Dendritic cell treated with granulocyte-macrophage colony-stimulating factor and Interleukin-4, amounts not matched to agents 40 ng/mL and 50 ng/mL, for 4 days (primary cell): ENCODE measurements at regions of chr7 and their contacts with region 1.

Region 1: GRCh38 chr7:140479062-140479738 is at the start of gene MKRN1:
- H3K4me3 Mint-ChIP-seq: peak within 1 kb of the TSS; percentile 93
- H3K27ac Mint-ChIP-seq: peak within 1 kb of the TSS; percentile 89
- H3K4me1 Mint-ChIP-seq: peaks cover 27% of the 10 kb centered on the region
- H3K27me3 Mint-ChIP-seq: no peaks in the 10 kb centered on the region

Region 2: GRCh38 chr7:140446464-140446863 is 32.7 kb before region 1 on chr7:
- intact Hi-C with region 1: no loop called
- H3K4me3 Mint-ChIP-seq: no peak overlapping the region
- H3K27ac Mint-ChIP-seq: no peak overlapping the region
- H3K4me1 Mint-ChIP-seq: peaks cover 6% of the 10 kb centered on the region
- H3K27me3 Mint-ChIP-seq: no peaks in the 10 kb centered on the region

Region 3: DNA sequence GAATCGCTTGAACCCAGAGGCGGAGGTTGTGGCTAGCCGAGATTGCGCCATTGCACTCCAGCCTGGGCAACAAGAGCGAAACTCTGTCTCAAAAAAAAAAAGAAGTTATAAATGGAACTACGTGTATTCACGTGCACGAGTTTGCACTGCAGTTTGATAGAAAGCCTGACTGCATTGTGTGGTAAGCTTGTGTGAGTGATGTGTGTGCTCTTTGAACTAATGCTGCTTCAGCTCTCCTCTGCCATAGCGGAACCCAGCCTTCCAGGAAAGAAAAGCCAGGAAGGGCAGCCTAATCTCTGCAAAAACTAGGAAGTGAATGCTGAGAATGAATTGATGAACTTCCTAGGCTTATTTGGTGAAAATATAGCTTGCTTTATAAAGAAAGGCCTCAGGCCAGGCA is 15.7 kb after region 1 on chr7:
- intact Hi-C with region 1: loop called (anchors 2 kb)
- H3K4me3 Mint-ChIP-seq: no peak overlapping the region
- H3K27ac Mint-ChIP-seq: peak overlapping the region; percentile 65
- H3K4me1 Mint-ChIP-seq: peaks cover 15% of the 10 kb centered on the region
- H3K27me3 Mint-ChIP-seq: no peaks in the 10 kb centered on the region

Region 4: DNA sequence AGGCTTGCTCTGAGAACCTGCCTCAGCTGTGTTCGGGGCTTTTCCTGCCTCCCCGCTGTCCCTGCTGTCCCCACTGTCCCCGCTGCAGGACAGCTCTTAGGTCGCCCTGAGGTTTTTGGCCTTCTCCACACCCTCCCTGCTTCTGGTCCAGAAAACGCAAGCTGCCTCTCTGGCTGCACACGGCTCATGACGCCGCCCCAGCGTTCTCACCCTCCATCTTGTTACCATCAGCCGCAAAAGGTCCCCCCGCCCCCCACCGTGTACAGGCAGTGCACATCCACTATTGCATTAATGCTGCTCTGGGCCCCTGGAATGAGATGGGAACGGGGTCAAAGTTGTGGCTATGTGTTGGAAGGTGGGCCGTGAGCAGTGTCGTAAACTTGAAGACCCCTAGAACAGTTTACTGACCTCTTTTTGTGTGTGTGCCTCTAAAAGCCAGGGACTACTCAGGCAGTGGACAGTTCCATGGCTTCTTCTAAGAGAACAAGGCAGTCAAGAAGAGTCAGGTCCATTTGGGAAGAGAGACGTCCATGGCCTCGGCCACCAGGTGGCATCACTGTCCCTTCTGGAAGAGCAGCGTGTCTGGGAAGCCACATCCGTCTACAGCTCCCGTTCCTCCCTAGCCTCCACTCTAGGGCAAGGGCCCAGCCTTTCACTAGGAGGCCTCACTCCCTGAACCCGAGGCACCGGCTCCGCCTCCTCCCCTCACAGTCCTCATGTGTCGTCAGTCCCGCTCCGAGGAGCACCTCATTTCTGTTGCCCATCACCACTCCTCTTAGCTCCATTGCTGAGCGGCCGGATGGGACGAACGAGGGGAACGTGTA is 38.6 kb after region 1 on chr7:
- intact Hi-C with region 1: loop called (anchors 2 kb)
- H3K4me3 Mint-ChIP-seq: no peak overlapping the region
- H3K27ac Mint-ChIP-seq: no peak overlapping the region
- H3K4me1 Mint-ChIP-seq: peaks cover 6% of the 10 kb centered on the region
- H3K27me3 Mint-ChIP-seq: peaks cover 4% of the 10 kb centered on the region

Region 5: DNA sequence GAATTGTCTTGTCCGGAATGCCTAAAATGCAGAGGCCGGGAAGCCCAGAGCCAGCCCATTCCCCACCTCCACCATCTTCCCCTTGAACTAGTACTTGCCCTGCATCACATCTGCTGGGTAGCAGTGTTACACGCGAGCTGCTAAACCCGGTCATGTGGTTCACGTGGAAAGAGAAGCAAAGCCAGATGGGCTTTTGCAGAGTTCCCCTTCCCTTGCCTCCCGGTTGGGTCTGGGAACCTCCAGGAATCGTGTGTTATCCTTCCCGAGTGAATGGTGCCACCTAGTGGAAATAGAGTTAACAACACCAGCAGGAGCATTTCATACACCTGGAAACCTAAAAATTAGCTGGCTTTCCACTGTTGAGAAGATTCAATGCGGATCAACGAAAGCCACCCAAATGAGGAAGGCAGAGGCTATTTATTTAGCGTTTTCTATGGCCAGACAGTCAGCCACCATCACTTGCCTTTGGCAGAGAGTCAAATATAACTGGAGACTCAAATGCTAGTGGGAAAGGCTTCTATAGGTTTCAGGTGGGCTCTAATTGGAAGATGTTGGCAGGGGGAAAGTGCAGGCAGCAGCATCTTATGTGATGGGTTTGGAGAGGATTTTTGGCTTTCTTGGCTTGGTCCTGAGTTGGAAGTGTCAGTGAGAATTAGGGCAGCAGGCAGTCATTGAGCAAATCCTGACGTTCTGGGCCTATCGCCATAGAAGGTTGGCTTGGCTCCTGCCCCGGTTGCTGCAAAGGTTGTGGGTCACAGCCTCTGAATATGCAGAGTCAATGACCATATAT is 174.3 kb after region 1 on chr7:
- intact Hi-C with region 1: loop called (anchors 5 kb)
- H3K4me3 Mint-ChIP-seq: no peak overlapping the region
- H3K27ac Mint-ChIP-seq: no peak overlapping the region
- H3K4me1 Mint-ChIP-seq: peaks cover 48% of the 10 kb centered on the region
- H3K27me3 Mint-ChIP-seq: peaks cover 17% of the 10 kb centered on the region